ENCODE measurements at regions of chr3 and their contacts with region 1.

Region 1: GRCh38 chr3:56988458-56989168 is 71.9 kb upstream of the SPATA12 start:
- DNase-seq: peak; percentile 74
- H3K4me3 Mint-ChIP-seq: no peak overlapping the region
- H3K27ac Mint-ChIP-seq: no peak overlapping the region
- H3K4me1 Mint-ChIP-seq: peaks cover 25% of the 10 kb centered on the region
- H3K27me3 Mint-ChIP-seq: peaks cover 14% of the 10 kb centered on the region

Region 2: DNA sequence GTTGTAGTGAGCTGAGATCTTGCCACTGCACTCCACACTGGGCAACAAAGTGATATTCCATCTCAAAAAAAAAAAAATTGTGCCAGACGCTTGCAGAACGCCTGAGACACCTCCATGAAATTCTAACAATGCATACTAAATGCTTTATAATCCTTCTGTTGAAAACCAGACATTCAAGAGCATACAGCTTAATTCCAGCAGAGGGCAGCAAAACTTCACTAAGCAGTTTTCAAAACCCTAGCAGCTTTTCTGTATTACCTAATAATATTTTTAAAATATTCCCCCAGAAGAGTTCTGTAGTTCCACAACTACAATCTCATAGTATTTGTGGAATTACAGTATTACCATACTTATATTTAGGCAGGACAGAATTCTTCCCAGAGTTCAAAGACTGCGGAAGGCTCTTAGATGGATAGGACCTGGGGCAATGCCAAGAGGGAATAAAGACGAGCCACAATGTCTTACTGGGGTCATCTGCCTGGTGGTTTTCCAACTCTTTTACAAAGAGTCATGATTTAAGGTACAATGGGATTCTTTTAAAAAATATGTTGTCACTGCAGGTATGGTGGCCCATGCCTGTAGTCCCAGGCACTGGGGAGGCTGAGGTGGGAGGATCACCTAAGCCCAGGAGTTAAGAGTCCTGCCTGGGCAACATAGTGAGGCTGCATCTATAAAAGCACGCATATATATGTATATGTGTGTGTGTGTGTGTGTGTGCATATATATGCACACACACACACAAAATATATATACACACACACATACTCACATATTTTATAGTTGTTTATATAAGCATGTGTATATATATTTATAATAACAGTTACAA is 285.9 kb before region 1 on chr3:
- CTCF ChIA-PET with region 1: interaction called, 85 read pairs
- POLR2A ChIA-PET with region 1: no interaction called
- DNase-seq: peak; percentile 73
- H3K4me3 Mint-ChIP-seq: no peak overlapping the region
- H3K27ac Mint-ChIP-seq: no peak overlapping the region
- H3K4me1 Mint-ChIP-seq: peaks cover 24% of the 10 kb centered on the region
- H3K27me3 Mint-ChIP-seq: no peaks in the 10 kb centered on the region

Region 3: DNA sequence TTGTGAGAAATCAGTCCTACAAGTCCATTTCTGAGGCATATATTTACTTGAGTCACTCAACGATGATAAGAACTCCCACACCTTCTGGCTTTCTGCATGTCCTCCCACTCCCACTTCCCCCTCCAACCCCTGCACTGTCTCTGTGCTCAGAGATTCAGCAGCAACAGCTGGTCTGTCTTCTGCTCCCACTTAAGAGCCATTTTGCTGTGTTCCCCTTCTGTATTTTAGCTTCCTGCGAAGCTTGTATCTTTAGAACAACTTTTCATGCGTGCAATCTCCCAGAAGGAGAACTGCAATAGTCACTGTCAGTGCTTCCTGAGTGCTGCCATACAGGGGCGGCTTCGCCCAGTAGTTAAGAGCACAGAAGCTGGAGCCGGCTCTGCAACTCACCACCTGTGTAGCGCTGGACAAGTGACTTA is 18.1 kb before region 1 on chr3:
- CTCF ChIA-PET with region 1: interaction called, 15 read pairs
- POLR2A ChIA-PET with region 1: no interaction called
- DNase-seq: no peak
- H3K4me3 Mint-ChIP-seq: no peak overlapping the region
- H3K27ac Mint-ChIP-seq: no peak overlapping the region
- H3K4me1 Mint-ChIP-seq: no peaks in the 10 kb centered on the region
- H3K27me3 Mint-ChIP-seq: peaks cover 6% of the 10 kb centered on the region

Region 4: DNA sequence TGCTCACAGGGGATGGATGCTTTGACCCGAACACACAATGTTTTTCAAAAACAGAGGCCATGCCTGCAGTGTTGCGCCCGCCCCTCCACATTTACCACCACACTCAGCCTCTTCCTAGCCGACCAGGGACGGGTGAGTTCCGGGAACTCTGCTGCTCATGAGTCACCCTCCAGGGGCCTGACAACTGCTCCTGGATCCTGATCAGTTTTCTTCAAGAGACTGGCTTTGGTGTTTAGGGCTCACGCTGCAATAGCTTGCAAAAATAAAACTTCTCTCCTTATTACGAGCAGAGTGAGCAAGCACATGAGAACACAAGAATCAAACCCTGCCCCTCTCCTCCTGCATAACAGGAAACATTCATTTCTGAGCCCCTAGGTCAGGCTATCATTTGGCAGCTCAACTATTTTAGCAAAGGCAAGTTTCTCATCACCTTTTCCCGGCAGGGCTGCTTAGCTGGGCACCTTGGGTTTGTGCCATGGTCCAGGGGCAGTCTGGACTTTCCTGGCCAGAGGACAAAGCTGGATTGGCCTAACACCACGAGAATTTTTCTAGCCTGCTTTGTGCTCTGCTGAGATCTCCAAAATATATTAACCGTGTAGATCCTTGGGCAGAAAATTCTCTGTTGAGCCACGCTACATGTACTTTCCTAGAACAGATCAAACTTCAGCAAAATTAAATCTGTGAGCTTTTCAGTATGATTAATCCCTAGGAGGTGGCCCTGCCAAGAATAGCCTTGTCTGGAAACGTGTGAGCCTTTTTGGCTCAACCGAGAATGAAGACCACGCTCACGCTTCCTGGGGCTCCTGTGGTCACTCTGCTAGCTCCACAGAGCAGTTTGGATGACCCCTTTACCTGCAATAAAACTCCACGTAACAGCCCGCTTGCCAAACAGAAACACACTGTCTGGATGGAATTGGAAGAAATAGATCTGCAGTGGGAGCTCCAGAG is 19.2 kb after region 1 on chr3:
- CTCF ChIA-PET with region 1: interaction called, 12 read pairs
- POLR2A ChIA-PET with region 1: no interaction called
- DNase-seq: no peak
- H3K4me3 Mint-ChIP-seq: no peak overlapping the region
- H3K27ac Mint-ChIP-seq: peak overlapping the region; percentile 76
- H3K4me1 Mint-ChIP-seq: peaks cover 9% of the 10 kb centered on the region
- H3K27me3 Mint-ChIP-seq: peaks cover 3% of the 10 kb centered on the region

Region 5: DNA sequence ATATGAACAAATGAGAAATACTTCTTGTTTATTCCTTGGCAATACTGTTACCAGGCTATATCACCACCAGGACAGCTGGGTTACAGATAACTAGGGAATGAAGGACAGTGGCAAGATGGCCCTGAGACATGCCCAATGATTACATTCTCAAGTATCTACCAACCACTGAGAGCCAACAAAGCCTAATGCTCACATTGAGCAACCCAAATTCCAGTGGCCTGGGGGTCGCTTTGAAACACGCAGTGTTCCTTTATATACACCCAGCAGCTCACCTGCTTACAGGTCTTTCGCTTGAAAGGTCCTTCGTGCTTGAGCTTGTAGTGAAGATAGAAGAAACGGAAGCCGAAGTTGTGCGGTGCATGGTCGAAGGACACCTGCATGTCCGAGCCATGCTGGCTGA is 117.0 kb after region 1 on chr3:
- CTCF ChIA-PET with region 1: no interaction called
- POLR2A ChIA-PET with region 1: no interaction called
- DNase-seq: no peak
- H3K4me3 Mint-ChIP-seq: no peak overlapping the region
- H3K27ac Mint-ChIP-seq: no peak overlapping the region
- H3K4me1 Mint-ChIP-seq: no peaks in the 10 kb centered on the region
- H3K27me3 Mint-ChIP-seq: peaks cover 2% of the 10 kb centered on the region